ENCODE measurements at regions of chr22 and their contacts with region 1.

Region 1: DNA sequence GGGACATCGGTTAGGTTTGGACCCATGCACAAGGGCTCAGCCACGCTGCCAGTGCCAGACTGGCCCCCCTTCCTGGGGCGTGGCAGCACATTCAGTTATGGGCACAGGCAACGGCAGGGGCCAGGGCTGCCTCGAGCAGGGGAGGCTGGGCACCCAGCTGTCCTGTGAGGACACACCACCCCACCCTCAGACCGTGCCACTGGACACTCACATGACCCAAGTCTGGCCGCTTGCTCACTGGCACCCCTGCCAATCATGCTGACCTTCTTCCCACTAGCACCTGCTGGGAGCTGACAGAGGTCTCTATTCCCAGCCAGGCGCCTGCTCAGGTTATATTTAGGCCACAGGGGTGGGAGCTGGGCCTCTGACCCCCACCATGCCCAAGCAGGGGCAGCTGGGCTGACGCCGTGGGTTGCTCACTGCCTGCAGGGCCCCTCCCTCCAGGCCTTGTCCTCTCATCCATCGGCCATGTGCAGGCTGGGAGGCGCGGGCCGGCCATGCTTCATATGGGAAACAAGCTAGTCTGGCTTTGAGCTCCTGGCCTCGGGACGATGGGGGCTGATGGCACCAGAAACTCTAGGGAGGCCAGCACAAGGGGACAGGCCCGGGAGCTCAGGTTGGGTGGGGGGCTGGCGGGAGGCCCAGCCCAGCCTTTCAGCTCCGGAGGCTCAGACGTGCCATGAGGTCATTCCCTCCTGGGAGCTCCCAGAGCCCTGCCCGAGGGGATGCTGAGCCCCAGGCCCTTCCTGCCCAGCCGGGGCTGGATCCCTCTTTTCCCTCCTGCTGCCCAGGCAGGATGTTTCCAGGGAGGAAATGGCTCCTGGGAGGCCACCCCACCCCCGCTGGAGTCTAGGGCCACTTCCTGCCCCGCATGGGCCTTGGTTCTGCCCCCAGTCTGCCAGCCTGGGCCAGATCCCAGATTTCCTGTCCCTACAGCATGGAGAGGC is 15.2 kb upstream of the TBX1 start:
- DNase-seq: no peak
- ATAC-seq: peak; percentile 25; the same call in 1 of the 2 replicates
- H3K4me3 Mint-ChIP-seq: no peak overlapping the region
- H3K27ac Mint-ChIP-seq: no peak overlapping the region
- H3K4me1 Mint-ChIP-seq: 0 out of 2 replicates have a peak, but pooled peaks cover 2% of the 10 kb centered on the region
- H3K27me3 Mint-ChIP-seq: no peaks in the 10 kb centered on the region; the same call in 1 of the 2 replicates
- CTCF ChIP-seq: no peak

Region 2: GRCh38 chr22:19723983-19724827 is 21.2 kb before region 1 on chr22:
- CTCF ChIA-PET with region 1: interaction called, 11 read pairs
- POLR2A ChIA-PET with region 1: no interaction called
- DNase-seq: peak; percentile 76
- ATAC-seq: peak; percentile 68
- H3K4me3 Mint-ChIP-seq: peak overlapping the region; percentile 53
- H3K27ac Mint-ChIP-seq: no peak overlapping the region
- H3K4me1 Mint-ChIP-seq: peaks cover 20% of the 10 kb centered on the region
- H3K27me3 Mint-ChIP-seq: peaks cover 95% of the 10 kb centered on the region
- CTCF ChIP-seq: peak; percentile 27; the same call in 1 of the 2 replicates

Region 3: DNA sequence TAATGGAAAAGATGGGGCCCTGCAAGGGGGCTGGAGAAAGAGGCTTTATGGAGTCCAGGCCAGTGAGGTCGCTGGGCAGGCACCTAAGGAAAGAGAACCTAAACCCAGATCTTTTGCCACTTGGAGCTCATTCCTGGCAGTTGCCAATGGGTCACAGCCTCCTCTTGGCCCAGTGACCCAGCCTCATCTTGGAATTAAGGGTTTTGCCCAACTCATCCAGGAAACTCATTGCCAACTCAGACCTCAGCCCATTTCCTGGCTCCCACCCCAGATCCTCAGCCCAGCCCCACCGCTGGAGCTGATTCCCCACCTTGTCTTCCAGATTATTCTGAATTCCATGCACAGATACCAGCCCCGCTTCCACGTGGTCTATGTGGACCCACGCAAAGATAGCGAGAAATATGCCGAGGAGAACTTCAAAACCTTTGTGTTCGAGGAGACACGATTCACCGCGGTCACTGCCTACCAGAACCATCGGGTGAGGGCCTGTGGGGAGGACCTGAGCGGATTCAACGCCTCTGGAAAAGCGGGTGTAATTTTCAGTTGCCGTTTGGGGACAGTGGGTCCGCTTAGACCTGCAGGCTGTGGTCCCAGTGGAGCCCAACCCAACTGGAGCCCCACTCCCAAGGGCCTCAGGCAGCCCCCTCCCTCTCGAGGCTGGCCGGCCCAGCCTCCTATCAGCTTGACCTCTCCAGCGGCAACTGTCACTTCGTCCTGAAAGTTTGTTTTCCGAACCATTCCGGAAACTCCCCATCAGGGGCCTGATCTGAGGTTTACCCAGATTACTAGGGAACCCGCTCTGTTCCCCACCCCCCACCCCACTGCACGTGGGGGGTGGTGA is 19.4 kb after region 1 on chr22:
- CTCF ChIA-PET with region 1: no interaction called
- POLR2A ChIA-PET with region 1: no interaction called
- DNase-seq: peak; percentile 38
- ATAC-seq: no peak
- H3K4me3 Mint-ChIP-seq: peak overlapping the region; percentile 60
- H3K27ac Mint-ChIP-seq: peak overlapping the region; percentile 70
- H3K4me1 Mint-ChIP-seq: peaks cover 35% of the 10 kb centered on the region
- H3K27me3 Mint-ChIP-seq: peaks cover 85% of the 10 kb centered on the region
- CTCF ChIP-seq: no peak

Measured in WTC11 (cell line).